Ascending aorta (tissue), 2 donors: ENCODE measurements at regions of chr11 and their contacts with region 1.

Region 1: GRCh38 chr11:86244522-86245368 is at the start of gene EED:
- DNase-seq: peak; percentile 67 to 96
- H3K4me3 ChIP-seq: peak within 1 kb of the TSS; percentile 86 to 94
- H3K27ac ChIP-seq: peak within 1 kb of the TSS; percentile 98 to 99
- H3K4me1 ChIP-seq: peaks cover 3 to 15% of the 10 kb centered on the region in 2 donors
- H3K27me3 ChIP-seq: no peaks in the 10 kb centered on the region
- CTCF ChIP-seq: no peak
- total RNA-seq, gene EED: 16.1 TPM

Region 2: DNA sequence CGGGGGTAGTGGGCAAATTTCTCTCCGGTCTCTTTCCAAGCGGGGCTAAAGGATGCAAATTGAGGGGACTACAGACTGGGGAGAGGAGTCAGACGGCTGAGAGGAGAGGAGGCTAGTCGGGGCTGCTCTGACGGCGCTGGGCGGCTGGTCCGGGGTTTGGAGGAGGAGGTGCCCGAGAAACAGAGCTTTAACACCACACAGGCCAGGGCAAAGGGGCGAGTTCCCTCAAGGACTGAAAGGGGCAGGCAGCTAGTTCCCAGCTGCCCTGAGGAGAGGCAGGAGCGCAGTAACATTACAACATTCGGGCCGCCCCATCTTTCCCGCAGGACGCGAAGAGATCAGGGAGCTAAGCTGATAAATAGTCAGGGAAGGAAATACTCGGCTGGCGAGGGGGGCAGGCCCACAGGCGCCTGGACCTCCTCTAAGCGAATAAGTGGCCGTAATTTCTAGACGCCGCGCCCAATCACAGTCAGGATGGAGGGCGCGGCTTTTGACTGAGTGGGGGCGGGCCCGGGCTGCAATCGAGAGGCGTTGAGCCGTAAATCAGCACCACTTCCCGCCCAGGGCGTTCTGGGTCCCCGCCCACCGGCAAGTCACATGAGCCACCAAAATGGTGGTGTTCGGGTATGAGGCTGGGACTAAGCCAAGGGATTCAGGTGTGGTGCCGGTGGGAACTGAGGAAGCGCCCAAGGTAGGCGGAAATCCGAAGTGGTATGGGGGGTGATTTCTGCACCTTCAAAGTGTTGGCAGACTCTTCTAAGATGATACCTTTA is 616.6 kb before region 1 on chr11 and contains the start of gene TMEM126B:
- intact Hi-C with region 1: loop called (anchors 10 kb)
- DNase-seq: peak; percentile 94 to 99
- H3K4me3 ChIP-seq: peak within 1 kb of the TSS; percentile 51 to 88
- H3K27ac ChIP-seq: peak within 1 kb of the TSS; percentile 92 to 97
- H3K4me1 ChIP-seq: peaks cover 0 to 6% of the 10 kb centered on the region in 2 donors
- H3K27me3 ChIP-seq: no peaks in the 10 kb centered on the region
- CTCF ChIP-seq: no peak
- total RNA-seq, gene TMEM126B: 76.4 TPM

Region 3: GRCh38 chr11:85682330-85683305 is 562.1 kb before region 1 on chr11:
- intact Hi-C with region 1: loop called (anchors 10 kb)
- DNase-seq: peak in 1 of 2 donors; percentile 71
- H3K4me3 ChIP-seq: peak overlapping the region; percentile 58 to 74
- H3K27ac ChIP-seq: no peak overlapping the region
- H3K4me1 ChIP-seq: peaks cover 5 to 6% of the 10 kb centered on the region in 2 donors
- H3K27me3 ChIP-seq: no peaks in the 10 kb centered on the region
- CTCF ChIP-seq: no peak

Region 4: DNA sequence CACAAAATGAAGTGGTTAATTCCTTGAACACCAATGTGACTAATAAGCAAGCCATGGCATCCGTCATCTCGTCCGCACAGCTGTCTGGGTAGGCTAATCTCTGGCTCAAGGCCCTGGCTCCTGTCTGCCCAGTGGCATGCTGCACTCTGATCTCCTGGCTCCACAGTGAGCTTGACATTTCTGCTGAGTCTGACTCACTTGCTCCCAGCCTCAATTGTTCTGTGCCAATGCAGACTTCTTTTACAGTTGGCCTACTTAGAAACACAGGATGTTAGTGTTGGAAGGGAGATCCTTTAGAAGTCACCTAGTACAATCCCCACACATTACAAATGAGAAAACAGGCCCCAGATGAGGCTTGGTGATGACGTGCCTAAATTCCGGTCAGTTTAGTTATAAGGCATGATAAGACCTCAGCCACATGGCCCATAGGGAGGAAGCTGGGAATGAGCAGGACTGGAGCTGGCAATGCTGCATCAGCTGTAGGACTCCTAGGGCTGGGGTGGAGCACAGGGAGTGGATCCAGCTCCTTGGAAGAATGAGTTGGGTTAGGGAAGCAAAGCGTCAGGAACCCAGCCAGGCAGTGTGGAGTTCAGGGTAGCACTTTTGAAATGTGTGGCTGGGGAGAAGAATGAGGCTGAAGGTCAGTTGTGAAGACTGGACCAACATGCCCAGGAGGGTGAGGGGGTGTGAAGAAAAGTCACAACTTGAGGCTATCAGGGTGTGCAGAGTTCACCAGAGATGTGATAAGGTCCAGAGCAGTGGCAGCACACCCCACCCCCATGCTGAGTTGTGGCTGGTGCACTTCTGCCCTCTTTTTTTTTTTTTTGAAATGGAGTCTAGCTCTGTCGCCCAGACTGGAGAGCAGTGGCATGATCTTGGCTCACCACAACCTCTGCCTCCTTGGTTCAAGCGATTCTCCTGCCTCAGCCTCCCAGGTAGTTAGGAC is 70.4 kb before region 1 on chr11:
- intact Hi-C with region 1: loop called (anchors 2 kb)
- DNase-seq: peak; percentile 73 to 97
- H3K4me3 ChIP-seq: no peak overlapping the region
- H3K27ac ChIP-seq: peak overlapping the region; percentile 72 to 88
- H3K4me1 ChIP-seq: peaks cover 9 to 16% of the 10 kb centered on the region in 2 donors
- H3K27me3 ChIP-seq: no peaks in the 10 kb centered on the region
- CTCF ChIP-seq: no peak

Region 5: DNA sequence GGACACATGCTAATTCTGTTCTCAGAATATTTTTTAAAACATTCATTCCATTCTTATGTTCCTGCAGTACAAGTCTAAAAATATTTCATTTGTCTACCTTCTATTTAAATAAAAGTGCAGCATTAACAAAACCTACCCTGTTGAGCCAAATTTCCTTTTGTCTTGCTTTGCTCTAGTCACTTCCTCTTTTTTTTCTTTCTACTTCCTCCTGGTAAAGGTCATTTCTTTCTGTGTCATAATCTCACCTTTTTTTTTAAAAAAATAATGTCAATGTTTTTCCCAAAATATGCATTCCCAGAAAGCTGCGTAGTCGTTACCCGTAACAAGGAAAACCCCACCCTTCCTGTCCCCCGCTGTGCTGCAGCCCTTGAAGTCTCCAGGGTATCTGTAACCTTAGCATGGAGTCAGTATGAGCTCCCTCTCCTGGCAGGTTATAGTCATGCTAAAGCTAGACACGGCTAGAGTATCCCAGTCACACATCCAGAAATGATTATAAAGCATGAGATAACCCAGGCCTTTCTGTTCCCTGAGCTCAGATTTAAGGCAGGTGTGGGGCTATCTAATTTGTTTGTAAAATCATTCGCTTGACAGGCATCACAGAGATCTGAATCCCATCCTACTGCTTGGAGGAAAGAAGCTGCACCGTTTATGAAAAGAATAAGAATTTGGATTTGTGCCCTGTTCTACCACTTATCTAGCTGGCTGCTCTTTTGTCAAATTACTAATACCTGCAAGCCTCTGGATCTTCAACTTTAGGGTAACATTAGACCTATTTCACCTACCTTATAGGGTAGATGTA is 51.2 kb before region 1 on chr11:
- intact Hi-C with region 1: loop called (anchors 2 kb)
- DNase-seq: peak; percentile 19 to 86
- H3K4me3 ChIP-seq: peak overlapping the region; percentile 0 to 27
- H3K27ac ChIP-seq: peak overlapping the region; percentile 35 to 49
- H3K4me1 ChIP-seq: peaks cover 4% of the 10 kb centered on the region in 2 donors
- H3K27me3 ChIP-seq: no peaks in the 10 kb centered on the region
- CTCF ChIP-seq: peak; percentile 68 to 72 (median 70)

Region 6: DNA sequence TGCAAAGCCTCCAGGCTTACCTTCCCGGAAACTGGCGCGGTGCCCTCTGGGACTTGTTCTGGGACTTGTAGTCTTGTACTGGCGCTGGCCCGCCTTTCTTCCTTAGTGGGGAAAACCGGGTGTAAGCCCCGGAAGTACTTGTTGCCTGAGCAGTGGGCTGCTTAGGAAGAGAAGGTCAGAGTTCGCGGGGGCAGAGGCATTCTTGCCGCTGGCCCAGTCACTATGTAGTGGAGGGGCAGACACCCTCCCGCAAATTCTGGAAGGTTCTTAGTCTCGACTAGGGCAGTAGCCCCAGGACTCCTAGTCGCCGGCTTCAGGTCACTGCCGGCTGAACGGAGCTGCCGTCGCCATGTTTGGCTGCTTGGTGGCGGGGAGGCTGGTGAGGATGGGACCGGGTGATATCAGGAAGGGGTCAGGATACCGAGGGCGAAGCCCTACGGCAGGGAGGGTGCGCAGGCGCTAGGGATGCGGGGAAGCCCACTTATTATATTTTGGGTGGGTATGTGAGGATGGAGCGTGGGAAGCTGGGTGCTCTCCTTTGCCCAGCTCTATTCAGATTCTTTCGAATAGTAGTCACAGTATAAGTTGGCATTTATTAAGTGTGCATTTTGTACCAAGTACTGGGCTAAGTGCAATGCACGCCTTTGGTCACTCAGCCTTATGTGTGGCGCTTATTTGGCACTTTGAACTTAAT is 57.5 kb after region 1 on chr11 and contains the start of gene HIKESHI:
- intact Hi-C with region 1: loop called (anchors 1 kb)
- DNase-seq: peak; percentile 98 to 100
- H3K4me3 ChIP-seq: peak within 1 kb of the TSS; percentile 84 to 89
- H3K27ac ChIP-seq: peak within 1 kb of the TSS; percentile 86 to 92
- H3K4me1 ChIP-seq: peaks cover 0 to 9% of the 10 kb centered on the region in 2 donors
- H3K27me3 ChIP-seq: no peaks in the 10 kb centered on the region
- CTCF ChIP-seq: no peak
- total RNA-seq, gene HIKESHI: 28.9 TPM